Right ventricle myocardium inferior (tissue), 1 donor: ENCODE measurements at regions of chr1 and their contacts with region 1.

Region 1: DNA sequence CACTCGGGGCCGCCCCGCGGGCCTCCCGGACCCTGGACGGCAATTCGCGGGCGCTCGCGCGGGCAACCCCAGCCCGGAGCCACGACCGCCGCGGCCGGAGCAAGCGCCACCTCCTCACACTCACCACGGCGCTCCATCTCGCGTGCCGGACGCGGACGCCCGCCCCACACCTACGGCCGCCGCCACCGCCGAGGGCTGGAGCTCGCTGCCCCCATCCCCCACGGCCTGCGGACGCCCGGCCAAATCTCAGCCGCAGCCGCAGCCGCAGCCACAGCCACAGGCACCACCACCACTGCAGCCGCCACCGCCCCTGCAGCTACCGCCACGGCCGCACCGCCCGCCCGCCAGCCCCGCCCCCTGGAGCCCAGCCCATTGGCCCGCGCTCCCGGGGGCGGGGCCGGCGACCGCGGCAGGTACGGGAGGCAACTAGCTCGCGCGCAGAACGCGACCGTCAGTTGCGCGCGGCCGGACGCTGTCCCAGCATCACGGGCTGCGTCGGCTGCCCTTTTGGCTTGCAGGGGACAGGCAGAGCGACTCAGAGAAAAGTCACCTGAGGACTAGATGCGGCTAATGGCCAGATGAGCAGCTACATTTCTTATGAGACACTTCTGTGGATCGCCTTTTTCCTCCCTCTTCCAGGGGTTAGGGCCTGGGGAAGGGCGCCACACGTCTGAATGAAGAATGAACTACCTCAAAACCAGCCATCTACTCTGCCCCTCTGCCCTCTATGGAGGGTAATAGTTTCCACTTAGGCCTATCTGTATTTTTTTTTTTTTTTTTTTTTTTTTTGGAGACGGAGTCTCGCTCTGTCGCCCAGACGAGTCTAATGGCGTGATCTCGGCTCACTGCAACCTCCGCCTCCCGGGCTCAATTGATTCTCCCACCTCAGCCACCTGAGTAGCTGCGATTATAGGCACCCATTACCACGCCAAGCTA is at the start of gene ARHGAP29:
- DNase-seq: peak; percentile 91
- ATAC-seq: peak; percentile 96
- total RNA-seq, gene ARHGAP29: 27.5 TPM

Region 2: GRCh38 chr1:94045465-94046056 is 192.0 kb before region 1 on chr1:
- intact Hi-C with region 1: loop called (anchors 2 kb)
- DNase-seq: peak; percentile 96
- ATAC-seq: peak; percentile 94

Region 3: DNA sequence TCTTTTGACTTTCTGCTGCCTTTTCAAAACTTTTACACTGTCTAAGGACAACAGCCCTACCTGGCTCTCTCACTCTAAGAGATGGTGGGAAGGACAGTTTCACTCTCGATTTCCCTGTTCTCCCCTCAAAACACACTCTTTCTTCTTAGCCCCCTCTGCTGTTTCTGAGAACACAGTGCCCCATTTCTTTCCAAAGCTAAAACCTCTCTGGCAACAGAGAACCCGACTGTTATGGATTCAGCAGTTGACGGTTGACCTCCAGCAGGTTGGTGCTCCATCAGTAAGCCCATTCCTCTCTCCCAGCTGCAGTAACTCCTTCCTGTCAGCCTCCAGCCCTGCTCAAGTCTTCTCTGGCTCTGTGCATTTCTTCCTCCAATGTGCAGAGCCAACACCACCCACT is 92.4 kb after region 1 on chr1:
- intact Hi-C with region 1: loop called (anchors 5 kb)
- DNase-seq: no peak
- ATAC-seq: peak; percentile 20